Mammary epithelial cell (primary cell): ENCODE measurements at regions of chr12 and their contacts with region 1.

Region 1: GRCh38 chr12:28130625-28131598 is 59.3 kb upstream of the CCDC91 start:
- DNase-seq: peak; percentile 99
- H3K4me3 ChIP-seq: peak overlapping the region in 1 of 3 experiments; percentile 2
- H3K27ac ChIP-seq: peak overlapping the region; percentile 98
- H3K4me1 ChIP-seq: peaks cover 55% of the 10 kb centered on the region
- H3K27me3 ChIP-seq: no peaks in the 10 kb centered on the region
- CTCF ChIP-seq: no peak

Region 2: GRCh38 chr12:27981873-27982272 is 149.0 kb before region 1 on chr12:
- CTCF ChIA-PET with region 1: no interaction called
- dilution Hi-C with region 1: no loop called
- in situ Hi-C with region 1: no loop called
- intact Hi-C with region 1: loop called (anchors 1 kb)
- DNase-seq: peak; percentile 98
- H3K4me3 ChIP-seq: no peak overlapping the region
- H3K27ac ChIP-seq: peak overlapping the region; percentile 98
- H3K4me1 ChIP-seq: peaks cover 28% of the 10 kb centered on the region
- H3K27me3 ChIP-seq: no peaks in the 10 kb centered on the region
- CTCF ChIP-seq: no peak

Region 3: GRCh38 chr12:28035500-28035899 is 95.4 kb before region 1 on chr12:
- CTCF ChIA-PET with region 1: interaction called, 10 read pairs
- dilution Hi-C with region 1: no loop called
- in situ Hi-C with region 1: no loop called
- intact Hi-C with region 1: loop called (anchors 1 kb)
- DNase-seq: peak; percentile 78
- H3K4me3 ChIP-seq: no peak overlapping the region
- H3K27ac ChIP-seq: peak overlapping the region; percentile 100
- H3K4me1 ChIP-seq: peaks cover 40% of the 10 kb centered on the region
- H3K27me3 ChIP-seq: no peaks in the 10 kb centered on the region
- CTCF ChIP-seq: no peak

Region 4: DNA sequence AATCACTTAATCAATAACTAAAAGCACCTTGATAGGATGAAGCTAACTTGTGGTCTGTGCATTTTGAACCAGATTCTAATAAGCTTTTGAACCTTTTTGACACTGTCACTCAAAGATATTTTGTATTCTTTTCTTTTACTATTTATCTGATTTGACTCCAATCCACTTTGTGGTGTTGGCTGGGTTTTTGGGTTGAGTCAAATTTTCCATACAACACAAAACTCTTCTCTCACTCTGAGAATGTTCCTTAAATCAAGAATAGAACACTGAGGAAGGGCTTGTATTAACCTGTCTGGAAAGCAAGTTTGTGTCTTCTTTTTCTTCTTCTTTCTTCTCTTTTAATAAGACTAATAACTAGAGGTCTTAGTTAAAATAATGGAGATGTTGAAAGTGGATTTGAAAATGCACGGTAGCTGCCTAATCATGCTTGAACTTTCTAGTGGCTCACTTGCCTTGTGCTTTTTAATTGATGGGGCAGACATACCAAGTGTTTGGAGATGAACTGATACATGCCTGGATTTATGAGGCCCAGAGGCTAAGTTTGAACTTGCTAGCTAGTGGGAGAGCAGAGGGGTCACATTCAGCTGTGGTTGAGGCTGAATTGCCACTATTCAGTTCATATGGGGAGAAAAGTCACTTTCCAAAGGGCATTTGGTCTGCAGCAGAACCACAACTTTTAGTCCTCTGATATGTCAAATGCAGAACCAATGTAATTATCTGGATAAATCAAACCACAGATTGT is 64.9 kb before region 1 on chr12:
- CTCF ChIA-PET with region 1: no interaction called
- dilution Hi-C with region 1: loop called (anchors 10 kb)
- in situ Hi-C with region 1: no loop called
- intact Hi-C with region 1: no loop called
- DNase-seq: peak; percentile 14
- H3K4me3 ChIP-seq: no peak overlapping the region
- H3K27ac ChIP-seq: no peak overlapping the region
- H3K4me1 ChIP-seq: peaks cover 11% of the 10 kb centered on the region
- H3K27me3 ChIP-seq: no peaks in the 10 kb centered on the region
- CTCF ChIP-seq: no peak

Region 5: DNA sequence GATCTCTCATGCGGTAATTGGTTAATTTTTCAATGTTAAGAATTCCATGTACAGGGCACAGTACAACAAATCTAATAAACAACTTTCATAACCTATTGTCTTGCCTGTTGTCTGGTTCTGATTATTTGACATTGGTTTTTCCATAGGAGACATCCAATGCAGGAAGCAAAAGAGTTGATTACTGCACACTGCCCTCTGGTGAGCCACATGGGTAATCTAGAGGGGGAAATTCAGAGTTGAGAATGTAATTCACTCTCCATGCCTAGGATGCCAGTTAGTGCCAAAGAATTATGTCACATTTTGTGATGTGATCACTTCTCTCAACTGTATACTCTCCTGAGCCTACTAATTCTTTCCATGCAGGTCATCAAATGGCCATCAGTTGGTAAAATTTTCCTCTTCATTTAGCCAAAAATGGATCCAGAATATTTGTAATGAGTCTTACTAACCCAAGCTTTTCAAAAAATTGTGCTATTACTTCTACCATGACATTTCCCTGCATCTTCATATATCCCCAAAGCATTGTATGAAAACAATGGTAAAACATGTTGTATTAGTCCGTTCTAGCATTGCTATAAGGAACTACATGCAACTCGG is 41.6 kb after region 1 on chr12:
- CTCF ChIA-PET with region 1: no interaction called
- dilution Hi-C with region 1: no loop called
- in situ Hi-C with region 1: no loop called
- intact Hi-C with region 1: loop called (anchors 5 kb)
- DNase-seq: peak; percentile 63
- H3K4me3 ChIP-seq: no peak overlapping the region
- H3K27ac ChIP-seq: peak overlapping the region; percentile 23
- H3K4me1 ChIP-seq: peaks cover 12% of the 10 kb centered on the region
- H3K27me3 ChIP-seq: no peaks in the 10 kb centered on the region
- CTCF ChIP-seq: peak; percentile 80 to 85